ENCODE measurements at regions of chr19 and their contacts with region 1.

Region 1: GRCh38 chr19:47075179-47075810 is 26.9 kb upstream of the TMEM160 start:
- DNase-seq: no peak
- ATAC-seq: no peak
- H3K4me3 ChIP-seq: no peak overlapping the region
- H3K27ac ChIP-seq: no peak overlapping the region
- H3K4me1 ChIP-seq: no peaks in the 10 kb centered on the region
- H3K27me3 ChIP-seq: no peaks in the 10 kb centered on the region

Region 2: DNA sequence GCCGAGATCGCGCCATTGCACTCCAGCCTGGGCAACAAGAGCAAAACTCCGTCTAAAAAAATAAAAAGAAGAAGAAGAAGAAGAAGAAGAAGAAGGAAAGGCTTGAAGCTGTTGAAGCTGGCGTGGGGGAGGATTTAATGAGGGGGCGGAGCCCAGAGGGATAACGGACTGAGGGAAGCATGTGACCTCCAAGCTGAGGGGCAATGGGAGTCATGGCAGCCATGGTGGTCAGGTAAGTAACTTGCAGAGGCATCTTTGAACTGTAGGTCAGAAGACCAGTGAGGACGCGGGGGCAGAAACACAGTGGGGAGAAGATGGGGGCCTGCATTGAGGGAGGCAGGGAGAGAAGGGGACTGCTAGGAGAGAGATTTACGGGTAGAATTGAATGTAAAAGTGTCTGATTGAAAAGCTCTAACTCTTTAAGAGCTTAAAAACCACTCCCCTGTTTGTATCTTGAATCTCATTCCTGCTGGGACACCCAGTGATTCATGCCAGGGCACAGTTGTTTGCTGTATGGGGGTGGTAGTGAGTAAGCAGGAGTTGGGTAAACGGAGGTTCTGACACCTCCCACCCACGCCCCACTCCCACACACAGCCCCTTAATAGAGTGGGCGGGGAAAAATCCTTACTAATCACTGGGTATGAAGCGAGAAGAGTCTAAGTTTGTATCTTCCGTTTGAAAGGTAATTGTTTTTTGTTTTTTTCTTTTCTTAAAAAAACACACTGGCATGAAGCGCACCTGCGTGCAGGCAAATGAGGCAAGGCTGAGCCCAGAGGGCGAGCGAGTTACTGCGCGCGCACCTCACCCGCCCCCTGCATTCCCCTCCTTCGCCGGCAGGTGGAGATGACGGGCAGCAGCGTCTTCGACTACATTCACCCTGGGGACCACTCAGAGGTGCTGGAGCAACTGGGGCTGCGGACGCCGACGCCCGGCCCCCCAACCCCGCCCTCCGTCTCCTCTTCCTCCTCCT is 39.9 kb before region 1 on chr19:
- intact Hi-C with region 1: loop called in 1 of 2 experiments (anchors 5 kb)
- DNase-seq: peak; percentile 87 to 96
- ATAC-seq: peak; percentile 94
- H3K4me3 ChIP-seq: peak overlapping the region in 1 of 2 donors; percentile 28
- H3K27ac ChIP-seq: no peak overlapping the region
- H3K4me1 ChIP-seq: no peaks in the 10 kb centered on the region
- H3K27me3 ChIP-seq: no peaks in the 10 kb centered on the region

Region 3: DNA sequence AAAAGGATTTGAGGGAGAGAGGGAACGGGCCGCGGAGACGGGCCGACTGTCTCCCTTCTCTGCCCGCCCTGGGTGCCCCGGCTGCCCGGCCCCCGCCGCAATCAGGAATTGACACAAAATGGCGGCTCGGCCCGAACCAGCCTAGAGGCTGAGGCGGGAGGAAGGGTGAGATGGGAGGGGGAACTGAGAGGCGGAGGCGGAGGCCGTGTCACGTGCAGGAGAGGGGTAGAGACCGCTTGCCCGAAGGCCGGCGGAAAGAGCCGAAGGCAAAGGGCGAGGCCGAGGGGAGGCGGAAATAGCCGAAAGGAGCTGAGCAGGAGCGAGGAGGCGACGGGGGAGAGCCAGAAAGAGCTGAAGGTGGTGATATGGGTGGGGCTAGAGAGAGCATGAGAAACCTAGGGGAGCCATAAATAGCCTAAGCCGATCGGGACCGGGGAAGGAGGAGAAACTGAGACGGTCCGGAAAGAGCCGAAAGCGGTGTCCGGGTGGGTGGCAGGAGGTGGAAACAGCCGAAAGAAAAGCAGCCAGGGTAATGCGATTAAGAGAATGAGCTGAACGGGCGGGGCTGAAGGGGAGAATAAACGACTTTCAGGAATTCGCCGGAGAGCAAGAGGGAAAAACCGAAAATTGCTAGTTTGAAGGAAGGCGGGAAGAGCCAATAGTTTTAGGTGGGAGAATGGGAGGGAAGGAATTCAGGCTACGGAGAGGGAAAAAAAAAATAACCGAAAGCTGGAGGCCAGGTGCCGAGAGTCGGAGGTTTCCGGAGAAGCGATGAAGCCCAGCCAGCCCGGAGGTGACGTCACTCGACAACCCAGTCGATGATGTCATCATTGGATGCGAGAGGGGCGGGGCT is 37.9 kb after region 1 on chr19 and contains the start of gene ZC3H4:
- intact Hi-C with region 1: loop called in 1 of 2 experiments (anchors 5 kb)
- DNase-seq: peak; percentile 99
- ATAC-seq: peak; percentile 99
- H3K4me3 ChIP-seq: peak within 1 kb of the TSS; percentile 86 to 97
- H3K27ac ChIP-seq: peak within 1 kb of the TSS; percentile 99 to 100
- H3K4me1 ChIP-seq: no peaks in the 10 kb centered on the region
- H3K27me3 ChIP-seq: no peaks in the 10 kb centered on the region
- total RNA-seq, gene ZC3H4: 33.9 to 34.6 TPM

Region 4: GRCh38 chr19:47124937-47125668 is 49.8 kb after region 1 on chr19:
- intact Hi-C with region 1: loop called (anchors 1 to 2 kb)
- DNase-seq: peak in 1 of 2 donors; percentile 6
- ATAC-seq: peak; percentile 78
- H3K4me3 ChIP-seq: no peak overlapping the region
- H3K27ac ChIP-seq: no peak overlapping the region
- H3K4me1 ChIP-seq: no peaks in the 10 kb centered on the region
- H3K27me3 ChIP-seq: no peaks in the 10 kb centered on the region

Region 5: GRCh38 chr19:47315125-47315821 is 240.0 kb after region 1 on chr19:
- intact Hi-C with region 1: no loop called
- DNase-seq: peak; percentile 84 to 88
- ATAC-seq: peak; percentile 68
- H3K4me3 ChIP-seq: no peak overlapping the region
- H3K27ac ChIP-seq: no peak overlapping the region
- H3K4me1 ChIP-seq: no peaks in the 10 kb centered on the region
- H3K27me3 ChIP-seq: no peaks in the 10 kb centered on the region